ENCODE measurements at regions of chr7 and their contacts with region 1.

Region 1: DNA sequence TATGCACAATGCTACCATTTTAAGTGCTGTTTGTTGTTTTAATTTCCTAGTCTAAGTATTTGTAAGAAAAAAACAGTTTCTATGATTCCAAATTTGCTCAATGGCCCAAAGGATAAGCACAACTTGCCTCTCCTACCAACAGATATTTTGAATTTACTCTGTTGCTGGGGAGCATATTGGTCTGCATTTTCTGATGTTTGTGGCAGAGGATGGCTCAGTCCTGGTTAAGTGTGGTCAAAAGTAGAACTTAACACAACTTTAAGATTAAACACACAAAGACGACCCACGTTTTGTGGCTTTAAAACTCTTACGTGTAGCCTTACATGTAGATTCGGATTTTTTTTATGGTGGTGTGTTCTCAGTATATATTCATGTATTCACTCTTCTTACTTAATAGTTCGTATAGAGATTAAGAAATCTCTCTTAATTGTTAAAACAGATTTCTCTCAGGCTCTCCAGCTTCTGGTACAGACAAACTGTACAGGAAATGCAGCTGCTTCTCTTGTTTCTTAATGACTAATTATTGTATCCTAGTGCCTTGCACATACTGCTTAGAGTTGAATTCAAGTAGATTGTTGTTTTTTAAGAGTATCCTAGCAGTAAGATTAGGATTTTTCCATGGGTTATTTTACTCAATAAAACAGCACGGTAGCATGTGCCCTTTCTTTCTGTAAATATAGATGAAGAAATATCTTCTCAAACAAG is 86.2 kb downstream of the GPR85 start:
- DNase-seq: no peak
- ATAC-seq: no peak
- H3K4me3 ChIP-seq: no peak overlapping the region
- H3K27ac ChIP-seq: no peak overlapping the region
- H3K4me1 ChIP-seq: peaks cover 0 to 8% (median 0%) of the 10 kb centered on the region in 9 donors
- H3K27me3 ChIP-seq: no peaks in the 10 kb centered on the region
- CTCF ChIP-seq: no peak

Region 2: DNA sequence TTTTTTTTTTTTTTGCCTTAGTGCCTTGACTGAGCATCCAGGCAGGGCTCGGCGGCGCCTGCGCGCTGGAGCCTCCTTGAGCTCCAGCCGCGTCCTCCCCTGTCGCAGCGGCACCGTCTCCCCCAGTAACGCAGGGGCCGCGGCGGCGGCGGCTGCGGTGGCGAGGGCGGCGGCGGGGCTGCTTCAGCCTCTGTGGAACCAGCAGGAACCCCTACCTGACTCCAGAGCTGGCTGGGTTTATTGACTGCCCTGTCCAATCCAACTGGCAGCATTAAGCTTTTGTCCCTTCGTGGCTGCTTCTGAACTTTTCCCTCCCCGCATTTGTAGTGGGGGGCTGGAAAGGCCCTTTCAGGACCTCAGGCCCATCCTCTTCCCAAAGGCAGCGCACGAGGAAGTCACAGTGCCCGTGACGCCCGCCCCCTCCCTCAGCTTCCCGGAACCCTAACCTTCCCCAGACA is 86.0 kb after region 1 on chr7 and contains the start of gene GPR85:
- intact Hi-C with region 1: no loop called
- DNase-seq: peak; percentile 40 to 64
- ATAC-seq: peak; percentile 90 to 97 (median 92)
- H3K4me3 ChIP-seq: peak within 1 kb of the TSS; percentile 14 to 64 (median 54)
- H3K27ac ChIP-seq: peak within 1 kb of the TSS in 5 of 10 donors; percentile 40 to 61 (median 54)
- H3K4me1 ChIP-seq: peaks cover 0 to 13% (median 0%) of the 10 kb centered on the region in 9 donors
- H3K27me3 ChIP-seq: peaks cover 0 to 39% (median 0%) of the 10 kb centered on the region in 7 donors
- CTCF ChIP-seq: no peak
- total RNA-seq, gene GPR85: 0.50 to 4.5 (median 1.2) TPM

Region 3: DNA sequence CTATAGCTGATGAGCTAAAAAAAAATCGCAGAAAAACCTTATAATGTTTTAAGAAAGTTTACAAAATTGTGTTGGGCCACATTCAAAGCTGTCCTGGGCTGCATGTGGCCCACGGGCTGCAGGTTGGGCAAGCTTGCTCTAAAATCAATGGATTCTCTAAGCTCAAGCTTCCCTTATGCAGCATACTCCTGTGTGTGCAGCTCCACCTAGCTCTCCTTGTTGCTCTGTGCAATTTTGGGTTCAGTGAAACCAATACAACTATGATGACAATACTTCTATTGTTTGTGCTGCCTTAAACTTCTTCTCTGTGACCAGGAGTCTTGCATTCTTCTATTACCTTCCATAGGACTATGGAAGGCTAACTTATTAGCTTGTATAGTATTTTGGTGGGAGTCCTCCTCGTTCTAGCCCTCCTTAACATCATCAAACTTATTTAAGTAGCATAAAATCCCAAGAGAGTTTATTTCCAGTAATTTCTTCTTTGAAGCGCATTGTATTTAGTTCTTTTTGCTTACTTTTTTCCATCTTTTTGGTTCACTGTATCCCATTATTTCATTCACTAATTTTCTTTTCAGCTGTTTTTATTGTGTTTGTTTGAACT is 288.8 kb after region 1 on chr7:
- intact Hi-C with region 1: loop called in 1 of 10 experiments (anchors 10 kb)
- DNase-seq: no peak
- ATAC-seq: peak in 5 of 8 donors; percentile 51 to 78 (median 67)
- H3K4me3 ChIP-seq: no peak overlapping the region
- H3K27ac ChIP-seq: no peak overlapping the region
- H3K4me1 ChIP-seq: no peaks in the 10 kb centered on the region
- H3K27me3 ChIP-seq: no peaks in the 10 kb centered on the region
- CTCF ChIP-seq: peak; percentile 5 to 62 (median 44)